Activated naive CD4-positive, alpha-beta T cell treated with anti-CD3 and anti-CD28 coated beads, Interleukin-2, amount 10 ng/mL, durations not matched to agents 7 days and 5 days (primary cell): ENCODE measurements at regions of chr1 and their contacts with region 1.

Region 1: GRCh38 chr1:26145041-26145959 is 13.6 kb upstream of the FAM110D start:
- DNase-seq: peak; percentile 85
- H3K4me3 Mint-ChIP-seq: no peak overlapping the region
- H3K27ac Mint-ChIP-seq: no peak overlapping the region
- H3K4me1 Mint-ChIP-seq: peaks cover 7% of the 10 kb centered on the region
- H3K27me3 Mint-ChIP-seq: peaks cover 40% of the 10 kb centered on the region

Region 2: GRCh38 chr1:25837262-25837875 is 307.9 kb before region 1 on chr1:
- CTCF ChIA-PET with region 1: no interaction called
- DNase-seq: no peak
- H3K4me3 Mint-ChIP-seq: no peak overlapping the region
- H3K27ac Mint-ChIP-seq: no peak overlapping the region
- H3K4me1 Mint-ChIP-seq: peaks cover under 1% of the 10 kb centered on the region
- H3K27me3 Mint-ChIP-seq: no peaks in the 10 kb centered on the region

Region 3: DNA sequence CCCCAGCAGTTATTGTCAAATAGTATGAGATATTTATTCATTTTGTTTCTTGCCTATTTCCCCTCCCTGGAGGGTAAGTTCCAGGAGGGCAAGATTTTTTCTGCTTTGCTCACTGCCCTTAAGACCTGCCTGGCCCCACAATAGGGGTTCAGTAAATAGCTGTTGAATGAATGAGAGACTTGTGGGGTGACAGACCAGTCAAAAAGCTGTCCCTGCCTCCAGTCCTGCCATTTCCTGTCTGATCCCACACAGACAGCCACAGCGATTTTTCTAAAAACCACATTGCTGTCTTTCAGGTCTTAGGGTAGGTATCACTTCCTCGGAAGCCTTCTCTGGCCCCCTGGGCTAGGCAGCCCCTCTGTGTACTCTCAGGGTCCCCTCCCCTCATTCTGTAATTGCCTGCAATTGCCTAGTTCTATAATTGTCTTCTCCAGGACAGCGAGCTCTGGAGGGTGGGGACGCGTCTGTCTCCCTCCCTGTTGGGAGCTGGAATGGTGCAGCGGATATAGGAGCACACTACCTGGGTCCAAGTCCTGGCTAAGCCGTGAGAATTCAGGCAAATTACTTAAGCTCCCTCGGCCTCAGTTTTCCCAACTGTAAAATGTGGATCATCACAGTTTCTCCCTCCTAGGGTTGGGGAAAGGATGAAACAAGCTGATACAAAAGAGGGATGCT is 125.5 kb before region 1 on chr1:
- CTCF ChIA-PET with region 1: no interaction called
- DNase-seq: no peak
- H3K4me3 Mint-ChIP-seq: no peak overlapping the region
- H3K27ac Mint-ChIP-seq: no peak overlapping the region
- H3K4me1 Mint-ChIP-seq: peaks cover 10% of the 10 kb centered on the region
- H3K27me3 Mint-ChIP-seq: peaks cover 50% of the 10 kb centered on the region

Region 4: GRCh38 chr1:26035959-26036755 is 109.1 kb before region 1 on chr1:
- CTCF ChIA-PET with region 1: interaction called, 17 read pairs
- DNase-seq: peak; percentile 82
- H3K4me3 Mint-ChIP-seq: peak overlapping the region; percentile 92
- H3K27ac Mint-ChIP-seq: peak overlapping the region; percentile 75
- H3K4me1 Mint-ChIP-seq: peaks cover 15% of the 10 kb centered on the region
- H3K27me3 Mint-ChIP-seq: peaks cover 83% of the 10 kb centered on the region

Region 5: GRCh38 chr1:26097696-26098095 is 47.6 kb before region 1 on chr1:
- CTCF ChIA-PET with region 1: interaction called, 212 read pairs
- DNase-seq: no peak
- H3K4me3 Mint-ChIP-seq: no peak overlapping the region
- H3K27ac Mint-ChIP-seq: no peak overlapping the region
- H3K4me1 Mint-ChIP-seq: peaks cover 6% of the 10 kb centered on the region
- H3K27me3 Mint-ChIP-seq: peaks cover 53% of the 10 kb centered on the region

Region 6: DNA sequence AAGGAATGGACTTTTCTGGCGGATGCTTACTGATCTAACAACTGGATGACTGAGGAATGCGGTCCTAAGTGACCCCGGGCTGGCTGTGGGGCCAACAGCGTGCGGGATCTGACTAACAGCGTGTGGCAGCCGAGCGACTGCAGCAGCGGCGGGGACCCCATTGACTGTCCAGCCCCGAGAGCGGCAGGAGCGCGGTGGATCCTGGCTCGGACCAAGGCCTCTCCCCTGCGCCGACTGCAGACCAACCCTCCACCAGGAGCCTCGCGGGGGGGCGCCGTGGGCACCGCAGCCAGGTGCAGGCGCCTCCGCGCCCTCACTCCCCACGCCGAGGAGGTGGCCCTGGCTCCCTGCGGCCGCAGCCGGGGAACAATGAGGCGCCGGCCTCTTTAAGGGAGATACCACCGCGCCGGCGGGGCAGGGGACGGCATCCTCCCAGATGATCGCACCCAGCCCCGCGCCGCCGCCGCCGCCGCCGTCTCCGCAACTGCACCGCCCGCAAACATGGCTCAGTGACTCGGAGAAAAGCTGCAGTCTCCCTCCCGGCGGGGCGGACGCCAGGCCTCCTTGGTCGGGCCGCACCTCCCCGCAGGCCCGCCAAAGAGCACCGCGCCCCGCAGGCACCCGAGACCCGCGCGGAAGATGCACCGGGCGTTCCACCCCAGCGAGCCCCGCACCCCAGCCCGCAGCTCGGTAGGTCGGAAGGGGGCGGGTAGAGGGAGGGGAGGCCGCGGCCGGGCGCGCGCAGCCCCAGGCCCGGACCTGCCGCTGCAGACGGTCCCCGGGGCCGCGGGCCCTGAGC is 34.4 kb before region 1 on chr1:
- CTCF ChIA-PET with region 1: interaction called, 212 read pairs
- DNase-seq: peak; percentile 87
- H3K4me3 Mint-ChIP-seq: peak overlapping the region; percentile 92
- H3K27ac Mint-ChIP-seq: peak overlapping the region; percentile 93
- H3K4me1 Mint-ChIP-seq: peaks cover 38% of the 10 kb centered on the region
- H3K27me3 Mint-ChIP-seq: no peaks in the 10 kb centered on the region

Region 7: DNA sequence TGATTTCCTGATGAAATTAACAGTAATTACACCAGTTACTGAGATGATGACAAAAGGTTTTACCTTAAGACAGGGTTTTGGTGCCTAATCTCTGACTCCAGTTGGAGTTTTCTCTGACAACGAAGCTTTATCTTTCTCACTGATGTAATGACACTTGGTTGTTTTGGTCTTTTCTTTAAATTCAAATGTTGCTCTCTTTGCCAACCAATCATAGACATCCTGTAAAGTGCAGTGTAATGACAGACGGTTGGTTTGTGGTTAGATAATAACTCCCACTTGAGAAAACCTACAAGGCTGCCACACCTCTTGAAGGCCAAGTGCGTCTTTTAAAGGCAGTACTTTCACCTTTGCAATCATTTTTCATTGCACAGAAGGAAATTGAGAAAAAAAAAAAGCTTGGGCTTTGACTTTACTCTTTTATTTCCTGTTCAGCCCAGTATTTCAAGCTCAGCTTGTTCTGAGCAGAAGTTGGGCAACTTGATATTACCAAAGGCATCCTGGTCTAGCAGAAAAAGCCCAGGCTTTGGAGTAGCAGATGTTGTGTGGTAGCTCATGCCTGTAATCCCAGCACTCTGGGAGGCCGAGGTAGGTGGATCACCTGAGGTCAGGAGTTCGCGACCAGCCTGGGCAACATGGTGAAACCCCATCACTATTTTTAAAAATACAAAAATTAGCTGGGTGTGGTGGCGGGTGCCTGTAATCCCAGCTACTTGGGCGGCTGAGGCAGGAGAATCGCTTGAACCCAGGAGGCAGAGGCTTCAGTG is 18.8 kb before region 1 on chr1:
- CTCF ChIA-PET with region 1: interaction called, 48 read pairs
- DNase-seq: peak; percentile 71
- H3K4me3 Mint-ChIP-seq: peak overlapping the region; percentile 76
- H3K27ac Mint-ChIP-seq: peak overlapping the region; percentile 99
- H3K4me1 Mint-ChIP-seq: peaks cover 68% of the 10 kb centered on the region
- H3K27me3 Mint-ChIP-seq: no peaks in the 10 kb centered on the region

Region 8: DNA sequence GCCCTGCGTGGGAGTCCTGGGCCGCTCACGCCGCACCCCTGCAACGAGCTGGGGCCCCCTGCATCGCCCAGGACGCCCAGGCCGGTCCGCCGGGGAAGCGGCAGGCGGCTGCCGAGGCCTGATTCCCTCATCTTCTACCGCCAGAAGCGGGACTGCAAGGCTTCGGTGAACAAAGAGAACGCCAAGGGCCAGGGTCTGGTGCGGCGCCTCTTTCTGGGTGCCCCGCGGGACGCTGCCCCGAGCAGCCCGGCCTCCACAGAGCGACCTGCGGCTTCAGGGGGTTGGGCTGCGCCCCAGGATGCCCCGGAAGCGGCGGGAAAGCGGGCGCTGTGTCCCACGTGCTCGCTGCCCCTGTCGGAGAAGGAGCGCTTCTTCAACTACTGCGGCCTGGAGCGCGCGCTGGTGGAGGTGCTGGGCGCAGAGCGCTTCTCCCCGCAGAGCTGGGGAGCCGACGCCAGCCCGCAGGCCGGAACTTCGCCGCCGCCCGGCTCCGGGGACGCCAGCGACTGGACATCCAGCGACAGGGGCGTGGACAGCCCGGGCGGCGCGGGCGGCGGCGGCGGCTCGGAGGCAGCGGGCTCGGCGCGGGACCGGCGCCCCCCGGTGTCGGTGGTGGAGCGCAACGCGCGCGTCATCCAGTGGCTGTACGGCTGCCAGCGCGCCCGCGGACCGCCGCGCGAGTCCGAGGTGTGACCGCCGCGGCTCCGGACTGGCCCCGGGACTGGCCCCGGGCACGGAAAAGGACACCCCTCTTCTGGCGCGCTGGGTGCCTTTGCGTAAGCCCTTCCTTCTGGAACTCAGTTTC is 16.3 kb after region 1 on chr1:
- CTCF ChIA-PET with region 1: interaction called, 47 read pairs
- DNase-seq: peak; percentile 69
- H3K4me3 Mint-ChIP-seq: peak overlapping the region; percentile 52
- H3K27ac Mint-ChIP-seq: no peak overlapping the region
- H3K4me1 Mint-ChIP-seq: peaks cover 32% of the 10 kb centered on the region
- H3K27me3 Mint-ChIP-seq: peaks cover 92% of the 10 kb centered on the region

Region 9: DNA sequence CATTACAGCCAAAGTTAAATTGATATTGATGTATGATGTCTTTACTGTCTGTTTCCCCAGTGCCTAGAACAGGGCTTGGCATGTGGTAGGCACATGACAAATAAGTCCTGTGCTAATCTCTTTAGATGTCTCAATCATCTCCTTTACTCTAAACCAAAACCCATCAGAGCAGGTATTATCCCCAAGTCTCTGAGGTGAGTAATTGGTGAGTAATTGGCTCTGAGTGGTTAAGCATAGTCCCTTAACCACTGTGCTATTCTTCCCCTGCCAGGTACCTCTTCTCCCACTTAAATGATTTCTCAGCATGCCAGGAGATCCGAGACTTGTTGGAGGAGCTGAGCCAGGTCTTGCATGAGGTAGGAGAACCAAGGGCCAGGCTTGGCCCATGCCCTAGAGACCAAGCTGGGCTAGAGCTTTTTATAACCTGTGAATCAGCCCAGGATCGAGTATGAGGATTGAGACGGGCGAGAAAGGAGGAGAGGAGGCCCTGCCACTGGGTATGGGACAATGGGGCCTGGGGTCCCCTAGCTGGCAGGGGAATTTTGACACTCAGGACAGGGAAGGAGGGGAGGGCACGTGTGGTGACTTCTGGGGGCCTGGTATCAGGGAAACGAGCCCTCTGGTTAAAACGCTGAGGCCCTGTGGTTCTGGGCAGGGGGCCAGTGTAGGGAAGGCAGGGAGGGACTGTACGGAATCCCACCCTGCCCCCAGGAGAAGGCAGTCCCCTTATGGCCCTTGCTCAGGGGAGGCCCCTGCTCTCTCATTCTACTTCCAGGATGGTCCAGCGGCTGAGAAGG is 36.5 kb after region 1 on chr1:
- CTCF ChIA-PET with region 1: no interaction called
- DNase-seq: no peak
- H3K4me3 Mint-ChIP-seq: no peak overlapping the region
- H3K27ac Mint-ChIP-seq: no peak overlapping the region
- H3K4me1 Mint-ChIP-seq: peaks cover 2% of the 10 kb centered on the region
- H3K27me3 Mint-ChIP-seq: peaks cover 13% of the 10 kb centered on the region

Region 10: GRCh38 chr1:26265405-26265804 is 120.1 kb after region 1 on chr1:
- CTCF ChIA-PET with region 1: no interaction called
- DNase-seq: no peak
- H3K4me3 Mint-ChIP-seq: no peak overlapping the region
- H3K27ac Mint-ChIP-seq: no peak overlapping the region
- H3K4me1 Mint-ChIP-seq: no peaks in the 10 kb centered on the region
- H3K27me3 Mint-ChIP-seq: no peaks in the 10 kb centered on the region